GM12878 (cell line): ENCODE measurements at regions of chr2 and their contacts with region 1.

Region 1: DNA sequence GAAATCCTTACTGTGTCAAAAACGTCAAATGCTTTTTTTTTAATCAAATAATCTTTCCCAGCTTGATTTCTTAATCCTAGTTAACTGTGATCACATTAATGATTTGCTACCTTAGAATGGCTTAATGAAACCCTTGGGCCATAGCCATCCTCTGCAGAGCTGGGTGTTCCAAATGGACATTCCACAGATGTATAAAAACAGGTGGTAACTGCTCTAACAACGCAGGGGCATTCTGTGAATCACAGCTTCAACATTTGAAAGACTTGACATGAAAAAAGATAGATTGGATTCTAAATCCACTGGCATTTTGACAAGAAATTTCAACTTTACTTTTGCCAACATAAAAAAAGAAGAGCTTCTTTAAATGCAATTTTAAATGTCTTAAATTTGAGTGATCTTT is 69.8 kb upstream of the RASGRP3 start:
- DNase-seq: no peak
- ATAC-seq: no peak
- H3K4me3 ChIP-seq: no peak overlapping the region
- H3K27ac ChIP-seq: no peak overlapping the region
- H3K4me1 ChIP-seq: no peaks in the 10 kb centered on the region
- H3K27me3 ChIP-seq: no peaks in the 10 kb centered on the region
- CTCF ChIP-seq: no peak
- EP300 ChIP-seq: no peak
- POLR2A ChIP-seq: no peak
- RAD21 ChIP-seq: no peak

Region 2: DNA sequence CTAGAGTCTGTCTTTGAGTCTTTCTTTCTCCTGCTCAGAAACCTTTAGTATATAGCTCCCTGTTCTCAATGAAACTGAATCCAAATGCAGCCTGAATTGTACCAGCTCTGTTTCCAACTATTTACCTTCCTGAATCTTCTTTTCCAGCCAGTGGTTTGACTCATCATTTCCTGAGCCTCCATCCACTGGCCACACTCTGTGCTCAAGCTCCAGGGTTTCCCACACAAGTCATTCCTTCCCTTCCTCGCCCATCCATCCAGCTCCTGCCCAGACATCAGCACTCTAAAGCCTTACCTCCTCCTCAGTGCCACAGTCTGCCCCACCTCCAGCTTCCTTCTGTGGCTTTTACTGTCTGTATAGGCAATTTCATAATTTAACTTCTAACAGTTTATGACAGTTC is 163.8 kb before region 1 on chr2:
- CTCF ChIA-PET with region 1: no interaction called
- POLR2A ChIA-PET with region 1: no interaction called
- RAD21 ChIA-PET with region 1: no interaction called
- SMC1A ChIA-PET with region 1: no interaction called
- in situ Hi-C with region 1: no loop called
- intact Hi-C with region 1: no loop called
- DNase-seq: no peak
- ATAC-seq: no peak
- H3K4me3 ChIP-seq: no peak overlapping the region
- H3K27ac ChIP-seq: no peak overlapping the region
- H3K4me1 ChIP-seq: no peaks in the 10 kb centered on the region
- H3K27me3 ChIP-seq: no peaks in the 10 kb centered on the region
- CTCF ChIP-seq: no peak
- EP300 ChIP-seq: no peak
- POLR2A ChIP-seq: no peak
- RAD21 ChIP-seq: no peak

Region 3: DNA sequence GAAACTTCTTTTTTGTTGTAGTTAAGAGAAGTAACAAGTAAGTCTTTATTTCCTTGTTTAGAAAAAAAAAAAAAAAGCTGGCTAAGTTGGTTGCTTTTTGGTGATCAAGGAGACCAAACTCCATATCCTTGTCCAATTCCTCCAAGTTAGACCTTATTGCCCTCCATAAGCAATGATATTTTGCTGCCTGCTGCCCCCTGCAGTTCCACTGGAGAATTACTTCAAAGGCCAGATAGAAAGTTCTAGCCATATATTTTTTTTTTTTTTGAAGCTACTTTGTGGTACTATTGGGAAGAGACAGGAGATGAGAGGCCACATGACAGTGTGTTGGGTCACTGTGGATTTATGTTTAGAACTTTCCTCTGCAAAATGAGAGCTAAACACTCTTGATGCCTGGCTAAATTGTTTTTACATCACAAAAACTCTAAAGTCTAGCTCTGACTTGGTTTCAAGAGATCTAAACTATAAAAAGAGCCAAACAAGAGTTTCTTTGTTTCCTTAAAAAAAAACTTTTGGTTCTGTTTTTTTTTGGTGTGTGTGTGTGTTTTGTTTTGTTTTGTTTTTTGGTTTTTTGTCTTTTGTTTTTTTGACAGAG is 10.9 kb before region 1 on chr2:
- CTCF ChIA-PET with region 1: interaction called, 10 read pairs
- POLR2A ChIA-PET with region 1: interaction called, 3 read pairs
- RAD21 ChIA-PET with region 1: no interaction called
- SMC1A ChIA-PET with region 1: interaction called, 3 read pairs
- in situ Hi-C with region 1: no loop called
- intact Hi-C with region 1: no loop called
- DNase-seq: no peak
- ATAC-seq: peak; percentile 71
- H3K4me3 ChIP-seq: no peak overlapping the region
- H3K27ac ChIP-seq: no peak overlapping the region
- H3K4me1 ChIP-seq: no peaks in the 10 kb centered on the region
- H3K27me3 ChIP-seq: no peaks in the 10 kb centered on the region
- CTCF ChIP-seq: peak; percentile 45 to 56 (median 52)
- EP300 ChIP-seq: no peak
- POLR2A ChIP-seq: no peak
- RAD21 ChIP-seq: peak; percentile 60

Region 4: GRCh38 chr2:33873076-33873605 is 466.5 kb after region 1 on chr2:
- CTCF ChIA-PET with region 1: no interaction called
- POLR2A ChIA-PET with region 1: no interaction called
- RAD21 ChIA-PET with region 1: no interaction called
- SMC1A ChIA-PET with region 1: no interaction called
- in situ Hi-C with region 1: no loop called
- intact Hi-C with region 1: no loop called
- DNase-seq: no peak
- ATAC-seq: no peak
- H3K4me3 ChIP-seq: no peak overlapping the region
- H3K27ac ChIP-seq: no peak overlapping the region
- H3K4me1 ChIP-seq: no peaks in the 10 kb centered on the region
- H3K27me3 ChIP-seq: no peaks in the 10 kb centered on the region
- CTCF ChIP-seq: no peak
- EP300 ChIP-seq: no peak
- POLR2A ChIP-seq: no peak
- RAD21 ChIP-seq: no peak